AG04450 (cell line): ENCODE measurements at regions of chr1 and their contacts with region 1.

Region 1: DNA sequence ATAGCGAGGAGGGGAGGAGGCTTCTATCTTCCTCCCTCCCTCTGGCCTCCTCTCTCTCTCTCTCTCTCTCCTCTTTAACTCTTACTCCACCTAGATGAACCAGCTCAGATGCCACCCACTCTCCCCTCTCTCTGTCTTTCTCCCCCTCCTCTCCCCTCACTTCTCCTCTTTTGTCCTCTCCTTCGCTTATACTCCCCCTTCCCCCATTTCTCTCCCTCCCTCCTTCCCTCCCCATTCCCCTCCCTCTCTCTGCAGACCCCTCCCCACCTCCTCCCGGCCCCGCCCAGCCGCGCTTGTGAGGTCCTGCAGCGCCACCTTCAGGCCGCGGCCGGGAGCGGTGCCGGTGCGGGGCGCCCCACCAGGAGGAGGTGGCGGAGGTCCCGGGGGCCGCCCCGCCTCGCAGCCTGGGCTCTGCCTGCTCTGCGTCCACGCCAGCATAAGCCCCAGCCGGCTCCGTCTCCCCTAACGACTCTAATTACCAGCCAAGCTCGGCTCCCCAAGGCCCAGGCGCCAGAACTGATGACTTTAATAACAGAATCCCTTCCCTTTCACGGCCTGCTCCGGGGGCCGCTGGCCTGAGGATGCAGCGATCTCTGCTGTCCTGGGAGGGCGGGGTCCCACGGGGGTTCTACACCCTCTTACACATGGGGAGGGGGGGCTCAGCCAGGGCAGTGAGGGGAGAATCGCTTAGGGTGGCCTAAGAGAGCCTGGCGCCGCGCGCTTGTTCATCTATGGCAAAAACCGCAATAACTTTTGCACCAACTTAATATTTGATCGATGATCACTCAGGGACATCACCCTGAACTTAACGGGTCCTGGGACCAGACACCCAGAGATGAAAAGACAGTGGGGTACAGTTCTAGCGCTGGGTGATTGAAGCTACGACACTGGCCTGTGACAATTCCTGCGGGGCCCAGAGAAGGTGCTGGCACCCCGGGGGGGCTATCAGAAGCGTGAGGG is 637.3 kb downstream of the MATN1 start:
- DNase-seq: no peak
- H3K4me3 ChIP-seq: peak overlapping the region; percentile 29; the same call in 1 of the 2 replicates
- H3K27ac ChIP-seq: no peak overlapping the region
- H3K27me3 ChIP-seq: peaks cover 6% of the 10 kb centered on the region
- CTCF ChIP-seq: peak; percentile 60

Region 2: GRCh38 chr1:29793101-29793546 is 293.0 kb before region 1 on chr1:
- CTCF ChIA-PET with region 1: interaction called, 14 read pairs
- POLR2A ChIA-PET with region 1: no interaction called
- DNase-seq: peak; percentile 48
- H3K4me3 ChIP-seq: no peak overlapping the region
- H3K27ac ChIP-seq: no peak overlapping the region
- H3K27me3 ChIP-seq: peaks cover 3% of the 10 kb centered on the region
- CTCF ChIP-seq: peak; percentile 91

Region 3: GRCh38 chr1:29835874-29836273 is 250.2 kb before region 1 on chr1:
- CTCF ChIA-PET with region 1: no interaction called
- POLR2A ChIA-PET with region 1: no interaction called
- DNase-seq: no peak
- H3K4me3 ChIP-seq: no peak overlapping the region
- H3K27ac ChIP-seq: no peak overlapping the region
- H3K27me3 ChIP-seq: peaks cover 5% of the 10 kb centered on the region
- CTCF ChIP-seq: no peak